Activated CD4-positive, alpha-beta memory T cell treated with anti-CD3 and anti-CD28 coated beads for 36 hours (primary cell): ENCODE measurements at regions of chr14 and their contacts with region 1.

Region 1: GRCh38 chr14:96362965-96363756 is at the starts of genes ATG2B and GSKIP:
- DNase-seq: peak; percentile 98
- H3K4me3 Mint-ChIP-seq: peak within 1 kb of the TSS; percentile 83
- H3K27ac Mint-ChIP-seq: peak within 1 kb of the TSS; percentile 83
- H3K4me1 Mint-ChIP-seq: peaks cover 50% of the 10 kb centered on the region
- H3K27me3 Mint-ChIP-seq: no peaks in the 10 kb centered on the region
- total RNA-seq, gene ATG2B: 12.0 to 12.8 TPM
- total RNA-seq, gene GSKIP: 22.8 to 29.7 TPM

Region 2: DNA sequence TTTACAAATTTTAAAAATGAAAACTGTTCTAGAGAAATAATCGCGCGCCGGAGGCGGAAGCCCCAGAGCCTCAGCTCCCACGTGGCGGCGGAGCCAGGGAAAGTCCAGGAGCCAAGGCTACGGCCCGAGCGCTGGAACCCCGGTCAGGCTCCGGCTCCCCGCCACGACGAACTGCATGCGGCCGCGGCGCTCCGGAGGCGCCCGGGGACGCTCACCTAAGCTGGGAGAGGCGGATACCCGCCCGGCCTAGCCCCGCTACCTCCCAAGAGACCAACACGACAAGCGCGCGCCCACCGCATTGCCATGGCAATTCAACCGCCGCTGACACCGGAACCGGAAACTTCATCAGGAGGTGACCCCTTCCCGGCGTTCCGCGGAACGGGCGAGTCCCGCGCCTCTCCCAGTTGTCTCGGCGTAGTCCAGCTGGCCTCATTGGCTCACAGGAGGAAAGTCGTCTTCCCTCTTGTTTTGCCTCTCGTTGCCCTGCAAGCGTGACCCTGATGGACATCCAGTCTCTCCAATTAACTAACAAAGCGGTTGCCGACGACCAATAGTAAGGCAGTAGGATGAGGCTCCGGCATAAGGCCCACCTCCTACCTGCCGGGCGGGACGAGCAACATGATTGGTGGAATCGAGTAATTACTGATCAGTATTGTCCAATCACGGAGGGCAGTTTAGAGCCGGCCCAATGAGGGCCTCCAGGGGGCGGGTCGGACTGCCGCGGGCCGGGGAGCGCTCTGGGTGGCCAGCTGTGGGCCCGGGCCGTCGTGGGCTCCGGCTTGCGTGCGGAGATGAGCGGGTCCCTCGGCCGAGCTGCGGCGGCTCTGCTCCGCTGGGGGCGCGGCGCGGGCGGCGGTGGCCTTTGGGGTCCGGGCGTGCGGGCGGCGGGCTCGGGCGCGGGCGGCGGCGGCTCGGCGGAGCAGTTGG is 828.6 kb before region 1 on chr14 and contains the start of gene GLRX5:
- CTCF ChIA-PET with region 1: no interaction called
- POLR2A ChIA-PET with region 1: no interaction called
- intact Hi-C with region 1: loop called (anchors 5 kb)
- DNase-seq: peak; percentile 98
- H3K4me3 Mint-ChIP-seq: peak within 1 kb of the TSS; percentile 93
- H3K27ac Mint-ChIP-seq: peak within 1 kb of the TSS; percentile 93
- H3K4me1 Mint-ChIP-seq: peaks cover 52% of the 10 kb centered on the region
- H3K27me3 Mint-ChIP-seq: no peaks in the 10 kb centered on the region
- total RNA-seq, gene GLRX5: 31.8 to 32.2 TPM

Region 3: DNA sequence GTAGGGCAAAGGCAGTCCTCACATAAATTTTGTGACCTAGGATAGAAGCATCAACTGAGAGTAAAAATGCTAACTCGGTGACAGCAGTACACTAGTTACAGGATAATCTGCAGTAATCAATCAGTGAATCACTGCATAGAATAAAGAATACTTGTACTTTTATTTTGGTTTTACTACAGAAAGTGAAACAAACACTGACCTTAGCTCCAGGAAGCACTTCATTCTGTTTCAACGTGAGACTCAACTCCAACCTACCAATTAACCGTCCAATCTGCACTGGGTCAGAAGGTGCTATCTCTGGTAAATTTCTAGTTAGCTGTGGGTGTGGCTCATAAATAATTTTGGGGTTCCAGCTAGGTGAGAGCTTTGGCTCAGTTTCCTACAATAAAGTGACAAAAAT is 21.8 kb before region 1 on chr14:
- CTCF ChIA-PET with region 1: no interaction called
- POLR2A ChIA-PET with region 1: no interaction called
- intact Hi-C with region 1: no loop called
- DNase-seq: no peak
- H3K4me3 Mint-ChIP-seq: no peak overlapping the region
- H3K27ac Mint-ChIP-seq: no peak overlapping the region
- H3K4me1 Mint-ChIP-seq: no peaks in the 10 kb centered on the region
- H3K27me3 Mint-ChIP-seq: no peaks in the 10 kb centered on the region

Region 4: DNA sequence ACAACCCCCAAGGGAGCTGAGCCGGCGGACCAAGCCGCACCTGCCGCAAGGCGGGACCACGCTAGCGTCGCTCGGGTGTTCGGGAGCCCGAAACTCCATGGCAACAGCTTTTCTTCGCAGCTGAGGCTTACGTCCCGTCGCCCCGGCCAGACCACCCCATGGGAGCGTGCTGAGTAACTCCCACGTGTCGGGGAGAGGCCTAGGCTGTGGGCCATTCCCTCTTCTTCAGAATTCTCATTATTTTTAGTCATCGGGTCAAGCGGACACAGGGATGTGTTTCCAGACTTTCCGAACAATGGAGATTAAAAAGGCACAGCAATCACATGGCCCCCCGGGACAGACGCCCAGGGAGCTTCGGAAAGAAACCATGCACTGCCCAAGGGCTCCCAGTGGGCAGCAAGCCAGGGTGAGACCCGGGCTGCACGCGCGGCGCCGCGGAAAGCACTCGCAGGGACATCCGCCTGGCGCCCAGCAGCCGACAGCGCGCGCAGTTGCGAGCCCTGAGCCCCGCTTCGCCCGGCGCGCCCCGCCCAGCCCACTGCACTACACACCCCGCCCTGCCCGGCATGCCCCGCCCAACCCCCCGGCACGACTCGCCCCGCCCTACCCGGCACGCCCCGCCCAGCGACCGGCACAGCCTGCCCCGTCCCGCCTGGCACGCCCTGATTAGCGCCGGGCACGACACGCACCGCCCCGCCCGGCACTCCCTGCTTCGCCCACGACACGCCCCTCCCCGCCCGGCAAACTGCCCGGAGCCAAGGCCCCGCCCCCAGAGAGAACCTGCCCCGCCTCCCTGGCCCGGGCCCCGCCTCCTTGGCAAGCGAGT is 28.3 kb after region 1 on chr14:
- CTCF ChIA-PET with region 1: no interaction called
- POLR2A ChIA-PET with region 1: no interaction called
- intact Hi-C with region 1: loop called (anchors 1 kb)
- DNase-seq: peak; percentile 99
- H3K4me3 Mint-ChIP-seq: peak overlapping the region; percentile 89
- H3K27ac Mint-ChIP-seq: peak overlapping the region; percentile 64
- H3K4me1 Mint-ChIP-seq: peaks cover 3% of the 10 kb centered on the region
- H3K27me3 Mint-ChIP-seq: no peaks in the 10 kb centered on the region